ENCODE measurements at regions of chr2 and their contacts with region 1.

Region 1: DNA sequence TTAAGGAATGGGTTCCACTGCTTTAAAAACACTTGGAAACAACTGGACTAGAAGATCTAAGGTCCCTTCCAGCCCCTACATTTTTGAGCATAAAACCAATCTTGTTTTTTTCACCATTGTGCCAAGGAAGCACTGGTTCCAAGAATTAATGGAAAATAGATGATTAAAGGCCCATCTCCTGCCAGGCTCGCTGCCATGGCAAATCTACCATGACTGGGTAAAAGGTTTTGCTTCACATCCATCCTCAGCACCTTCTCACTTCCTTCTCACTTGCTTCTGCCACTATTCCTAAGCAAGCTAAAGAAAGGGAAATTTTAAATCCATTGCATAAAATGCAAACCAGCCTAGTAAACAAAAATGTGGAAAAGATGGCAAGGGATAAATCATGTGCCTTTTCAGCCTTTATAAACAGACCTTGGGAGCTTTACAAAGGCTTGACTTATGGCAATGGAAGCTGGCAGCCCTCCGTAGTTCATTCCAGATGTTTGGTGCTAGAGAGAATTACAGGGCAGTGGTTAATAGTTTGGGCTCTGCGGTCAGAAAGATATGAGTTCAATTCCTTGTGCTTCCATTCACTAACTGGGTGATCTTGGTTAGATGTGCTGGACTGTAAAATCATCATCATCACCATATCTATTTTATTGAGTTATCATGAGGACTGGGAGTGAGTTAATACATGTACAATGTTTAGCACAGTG is 27.0 kb upstream of the ST3GAL5 start:
- DNase-seq: no peak
- ATAC-seq: no peak
- H3K4me3 ChIP-seq: no peak overlapping the region
- H3K4me3 Mint-ChIP-seq: no peak overlapping the region
- H3K27ac ChIP-seq: no peak overlapping the region
- H3K27ac Mint-ChIP-seq: no peak overlapping the region
- H3K4me1 ChIP-seq: no peaks in the 10 kb centered on the region
- H3K4me1 Mint-ChIP-seq: no peaks in the 10 kb centered on the region
- H3K27me3 ChIP-seq: no peaks in the 10 kb centered on the region
- H3K27me3 Mint-ChIP-seq: no peaks in the 10 kb centered on the region
- CTCF ChIP-seq: no peak

Region 2: DNA sequence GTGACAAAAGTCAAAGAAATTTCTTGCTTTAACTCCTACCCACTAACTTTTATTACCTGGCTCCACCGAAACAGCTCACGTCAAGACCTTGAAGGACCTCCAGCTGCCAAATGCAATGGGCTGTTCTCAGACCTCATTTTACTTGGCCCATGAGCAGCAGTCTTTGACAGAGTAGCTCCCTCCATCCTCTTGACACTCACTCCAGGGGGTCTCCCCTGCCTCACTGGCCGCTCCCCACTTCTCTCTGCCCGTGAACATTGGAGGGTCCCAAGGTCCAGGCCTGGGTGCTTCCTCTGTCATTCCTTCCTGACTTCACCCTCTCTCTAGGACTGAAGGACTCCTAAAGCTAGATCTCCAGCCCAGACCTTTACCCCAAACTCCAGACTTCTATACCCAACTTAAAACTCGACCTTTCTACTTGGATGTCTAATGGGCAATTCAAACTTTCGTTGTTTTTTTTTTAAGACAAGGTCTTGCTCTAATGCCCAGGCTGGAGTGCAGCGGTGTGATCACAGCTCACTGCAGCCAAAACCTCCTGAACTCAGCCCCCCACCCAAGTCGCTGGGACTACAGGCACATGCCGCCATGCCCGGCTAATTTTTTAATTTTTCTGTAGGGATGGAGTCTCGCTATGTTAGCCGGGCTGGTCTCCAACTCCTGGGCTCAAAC is 66.0 kb after region 1 on chr2:
- CTCF ChIA-PET with region 1: interaction called, 3 read pairs
- POLR2A ChIA-PET with region 1: no interaction called
- intact Hi-C with region 1: loop called in 1 of 2 experiments (anchors 5 kb)
- DNase-seq: no peak
- ATAC-seq: no peak
- H3K4me3 ChIP-seq: no peak overlapping the region
- H3K4me3 Mint-ChIP-seq: no peak overlapping the region
- H3K27ac ChIP-seq: no peak overlapping the region
- H3K27ac Mint-ChIP-seq: no peak overlapping the region
- H3K4me1 ChIP-seq: no peaks in the 10 kb centered on the region
- H3K4me1 Mint-ChIP-seq: no peaks in the 10 kb centered on the region
- H3K27me3 ChIP-seq: no peaks in the 10 kb centered on the region
- H3K27me3 Mint-ChIP-seq: peaks cover 4% of the 10 kb centered on the region
- CTCF ChIP-seq: no peak

Measured in CD4-positive, alpha-beta T cell (primary cell).